CD8-positive, alpha-beta T cell (primary cell): ENCODE measurements at regions of chr2 and their contacts with region 1.

Region 1: DNA sequence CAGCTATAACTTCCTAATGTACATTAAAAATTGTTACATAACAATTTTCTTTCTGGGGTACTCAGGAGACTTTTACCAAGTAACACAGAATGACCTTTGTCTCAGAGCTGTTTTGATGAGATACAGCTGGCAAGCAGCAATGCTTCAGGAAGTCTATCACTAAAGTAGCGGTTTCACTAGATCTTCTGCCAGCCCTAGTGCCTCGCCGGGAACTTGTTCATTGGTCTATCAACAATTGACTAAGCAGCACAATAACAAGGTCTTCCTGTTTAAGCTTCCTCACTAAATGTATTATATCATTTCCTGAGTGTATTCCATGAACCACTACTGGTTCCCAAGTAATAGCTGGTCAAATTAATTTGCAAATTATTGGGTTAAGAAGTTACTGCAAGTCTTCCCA is 69.2 kb downstream of the TRIP12 start:
- DNase-seq: peak; percentile 16 to 75 (median 63)
- ATAC-seq: peak; percentile 92
- H3K4me3 ChIP-seq: no peak overlapping the region
- H3K4me3 Mint-ChIP-seq: peak overlapping the region; percentile 33
- H3K27ac ChIP-seq: peak overlapping the region; percentile 0 to 28
- H3K27ac Mint-ChIP-seq: peak overlapping the region; percentile 87
- H3K4me1 ChIP-seq: peaks cover 34% of the 10 kb centered on the region
- H3K4me1 Mint-ChIP-seq: peaks cover 73% of the 10 kb centered on the region
- H3K27me3 ChIP-seq: no peaks in the 10 kb centered on the region
- H3K27me3 Mint-ChIP-seq: no peaks in the 10 kb centered on the region
- CTCF ChIP-seq: no peak

Region 2: GRCh38 chr2:229748950-229749349 is 103.6 kb before region 1 on chr2:
- CTCF ChIA-PET with region 1: no interaction called
- POLR2A ChIA-PET with region 1: no interaction called
- intact Hi-C with region 1: no loop called
- DNase-seq: no peak
- ATAC-seq: no peak
- H3K4me3 ChIP-seq: no peak overlapping the region
- H3K4me3 Mint-ChIP-seq: no peak overlapping the region
- H3K27ac ChIP-seq: no peak overlapping the region
- H3K27ac Mint-ChIP-seq: no peak overlapping the region
- H3K4me1 ChIP-seq: no peaks in the 10 kb centered on the region
- H3K4me1 Mint-ChIP-seq: peaks cover 4% of the 10 kb centered on the region
- H3K27me3 ChIP-seq: no peaks in the 10 kb centered on the region
- H3K27me3 Mint-ChIP-seq: no peaks in the 10 kb centered on the region
- CTCF ChIP-seq: no peak

Region 3: GRCh38 chr2:229774237-229774636 is 78.3 kb before region 1 on chr2:
- CTCF ChIA-PET with region 1: no interaction called
- POLR2A ChIA-PET with region 1: no interaction called
- intact Hi-C with region 1: no loop called
- DNase-seq: no peak
- ATAC-seq: no peak
- H3K4me3 ChIP-seq: no peak overlapping the region
- H3K4me3 Mint-ChIP-seq: no peak overlapping the region
- H3K27ac ChIP-seq: no peak overlapping the region
- H3K27ac Mint-ChIP-seq: no peak overlapping the region
- H3K4me1 ChIP-seq: peaks cover 14% of the 10 kb centered on the region
- H3K4me1 Mint-ChIP-seq: peaks cover 19% of the 10 kb centered on the region
- H3K27me3 ChIP-seq: no peaks in the 10 kb centered on the region
- H3K27me3 Mint-ChIP-seq: no peaks in the 10 kb centered on the region
- CTCF ChIP-seq: no peak

Region 4: GRCh38 chr2:229835596-229836283 is 16.8 kb before region 1 on chr2:
- CTCF ChIA-PET with region 1: interaction called, 8 read pairs
- POLR2A ChIA-PET with region 1: interaction called, 4 read pairs
- intact Hi-C with region 1: loop called in 1 of 2 experiments (anchors 2 kb)
- DNase-seq: peak in 3 of 9 experiments; percentile 25 to 71 (median 53)
- ATAC-seq: peak; percentile 73
- H3K4me3 ChIP-seq: no peak overlapping the region
- H3K4me3 Mint-ChIP-seq: peak overlapping the region; percentile 16
- H3K27ac ChIP-seq: peak overlapping the region in 1 of 2 experiments; percentile 26
- H3K27ac Mint-ChIP-seq: peak overlapping the region; percentile 25
- H3K4me1 ChIP-seq: peaks cover 47% of the 10 kb centered on the region
- H3K4me1 Mint-ChIP-seq: peaks cover 71% of the 10 kb centered on the region
- H3K27me3 ChIP-seq: no peaks in the 10 kb centered on the region
- H3K27me3 Mint-ChIP-seq: no peaks in the 10 kb centered on the region
- CTCF ChIP-seq: no peak

Region 5: DNA sequence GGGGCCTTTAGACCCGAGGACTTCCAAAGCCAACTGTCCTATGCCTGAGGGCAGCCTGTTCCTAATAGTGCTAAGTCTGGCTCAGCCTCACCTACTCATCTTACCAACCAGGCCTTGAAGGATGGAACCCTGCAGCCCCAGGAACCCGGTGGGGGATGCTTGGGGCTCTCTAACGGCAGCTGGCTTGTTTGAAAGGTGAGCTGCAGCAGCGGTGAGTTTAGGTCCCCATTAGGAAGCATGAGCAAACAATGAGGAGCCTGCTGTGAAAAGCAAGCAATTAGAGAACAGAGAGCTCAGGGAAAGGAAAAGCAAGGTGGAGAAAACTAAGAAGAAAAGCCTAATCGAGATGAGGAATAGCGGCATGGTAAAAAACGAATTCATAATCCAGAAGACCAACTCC is 327.3 kb after region 1 on chr2:
- CTCF ChIA-PET with region 1: no interaction called
- POLR2A ChIA-PET with region 1: no interaction called
- intact Hi-C with region 1: no loop called
- DNase-seq: no peak
- ATAC-seq: no peak
- H3K4me3 ChIP-seq: no peak overlapping the region
- H3K4me3 Mint-ChIP-seq: no peak overlapping the region
- H3K27ac ChIP-seq: no peak overlapping the region
- H3K27ac Mint-ChIP-seq: no peak overlapping the region
- H3K4me1 ChIP-seq: no peaks in the 10 kb centered on the region
- H3K4me1 Mint-ChIP-seq: no peaks in the 10 kb centered on the region
- H3K27me3 ChIP-seq: no peaks in the 10 kb centered on the region
- H3K27me3 Mint-ChIP-seq: no peaks in the 10 kb centered on the region
- CTCF ChIP-seq: no peak